ENCODE measurements at regions of chr14 and their contacts with region 1.

Region 1: GRCh38 chr14:54805521-54806322 is 96.9 kb downstream of the GCH1 start:
- DNase-seq: peak; percentile 5
- H3K4me3 ChIP-seq: no peak overlapping the region; the same call in 1 of the 2 replicates
- CTCF ChIP-seq: peak; percentile 92

Region 2: DNA sequence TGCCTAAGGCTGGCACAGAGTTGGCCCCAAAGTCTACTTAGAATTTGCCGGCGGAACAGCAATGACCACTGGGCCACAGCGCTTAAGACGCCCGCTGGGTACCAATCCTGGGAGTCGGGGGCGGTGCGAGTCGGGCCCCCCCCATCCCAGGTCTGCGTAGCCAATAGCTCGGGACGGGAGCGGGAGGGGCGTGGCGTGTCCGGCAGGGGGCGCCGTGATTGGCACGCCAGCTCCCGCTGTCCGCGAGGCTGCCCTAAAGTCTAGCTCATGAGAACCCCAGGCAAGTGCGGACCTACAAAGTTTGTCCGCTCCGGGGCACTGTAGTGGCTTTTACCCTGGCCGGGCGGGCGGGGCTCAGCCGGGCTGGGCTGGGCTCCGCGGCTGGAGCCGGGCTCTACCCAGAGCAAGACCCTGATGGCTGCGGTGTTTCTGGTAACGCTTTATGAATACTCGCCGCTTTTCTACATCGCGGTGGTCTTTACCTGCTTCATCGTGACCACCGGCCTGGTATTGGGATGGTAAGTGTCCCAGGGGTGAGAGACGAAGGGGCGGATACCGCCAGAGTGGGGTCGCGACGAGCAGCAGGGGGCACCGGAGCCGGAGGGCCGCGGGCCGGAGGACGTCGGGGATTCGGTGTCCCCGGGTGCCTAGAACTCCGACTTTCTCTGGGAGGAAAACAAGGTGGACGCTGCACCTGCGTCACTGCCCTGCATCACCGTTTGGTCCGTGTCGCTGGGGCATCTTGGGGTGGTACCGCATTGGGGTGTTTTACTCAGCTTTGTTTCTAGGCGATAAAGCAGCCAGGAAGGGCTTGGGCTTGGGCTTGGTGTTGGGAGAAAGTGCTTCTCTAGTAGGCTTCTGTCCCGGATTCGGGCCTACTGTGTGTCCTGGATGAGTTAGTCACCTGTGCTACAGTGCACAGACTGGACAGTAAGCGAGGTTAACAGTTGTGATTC is 295.9 kb before region 1 on chr14 and contains the start of gene CGRRF1:
- CTCF ChIA-PET with region 1: interaction called, 21 read pairs
- POLR2A ChIA-PET with region 1: interaction called, 4 read pairs
- DNase-seq: peak; percentile 89
- H3K4me3 ChIP-seq: peak within 1 kb of the TSS; percentile 98
- CTCF ChIP-seq: peak; percentile 77

Region 3: GRCh38 chr14:54782751-54783679 is 22.7 kb before region 1 on chr14:
- CTCF ChIA-PET with region 1: interaction called, 11 read pairs
- POLR2A ChIA-PET with region 1: no interaction called
- DNase-seq: no peak
- H3K4me3 ChIP-seq: no peak overlapping the region
- CTCF ChIP-seq: no peak

Region 4: GRCh38 chr14:54818201-54819133 is 12.7 kb after region 1 on chr14:
- CTCF ChIA-PET with region 1: interaction called, 77 read pairs
- POLR2A ChIA-PET with region 1: no interaction called
- DNase-seq: peak; percentile 65
- H3K4me3 ChIP-seq: no peak overlapping the region
- CTCF ChIP-seq: no peak

Measured in AG04449 (cell line).